Common myeloid progenitor, CD34-positive (primary cell): ENCODE measurements at regions of chr19 and their contacts with region 1.

Region 1: DNA sequence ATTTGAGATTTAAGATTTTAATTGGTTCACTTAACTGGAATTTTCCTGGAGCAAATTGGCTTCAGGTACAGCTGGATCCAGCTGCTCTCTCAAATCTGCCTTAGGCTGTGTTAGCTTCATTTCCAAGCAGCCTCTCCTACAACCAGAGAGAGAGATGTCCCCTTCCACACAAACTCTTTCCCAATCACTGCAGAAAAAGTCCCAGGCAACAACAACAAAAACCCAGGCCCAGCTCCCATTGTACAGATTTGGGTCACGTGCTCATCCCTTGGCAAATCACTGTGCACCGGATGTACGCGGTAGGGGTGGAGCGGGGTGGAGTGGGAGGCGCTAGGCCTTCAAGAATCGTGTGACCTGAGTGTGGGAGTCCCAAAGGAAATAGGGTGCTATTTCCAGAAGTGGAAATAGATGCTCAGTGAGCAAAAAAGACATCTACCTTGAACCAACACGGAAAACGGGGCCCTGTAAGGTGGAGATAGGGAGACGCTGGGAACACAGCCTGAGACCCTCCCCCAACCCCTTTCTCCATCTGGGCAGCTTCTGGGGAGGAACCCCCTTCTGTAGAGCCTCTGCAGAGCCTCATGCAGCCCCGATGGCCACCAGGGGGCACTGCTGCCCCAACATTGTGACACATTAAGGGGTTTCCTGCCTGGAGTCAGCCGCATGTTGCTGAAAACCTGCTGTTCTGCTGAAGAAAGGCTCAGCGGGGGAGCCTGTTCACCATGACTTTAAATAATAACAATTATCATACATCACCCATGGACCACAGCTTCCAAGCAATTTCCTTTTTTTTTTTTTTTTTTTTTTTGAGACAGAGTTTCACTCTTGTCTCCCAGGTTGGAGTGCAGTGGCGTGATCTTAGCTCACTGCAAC is 25.4 kb downstream of the HPN start:
- DNase-seq: peak; percentile 89 to 94 (median 92)
- H3K4me3 ChIP-seq: no peak overlapping the region
- H3K27ac ChIP-seq: no peak overlapping the region
- H3K4me1 ChIP-seq: no peaks in the 10 kb centered on the region
- H3K27me3 ChIP-seq: peaks cover 0 to 4% (median 0%) of the 10 kb centered on the region in 5 experiments

Region 2: GRCh38 chr19:35030257-35031071 is 36.5 kb before region 1 on chr19 and contains the start of gene SCN1B:
- CTCF ChIA-PET with region 1: no interaction called
- POLR2A ChIA-PET with region 1: no interaction called
- DNase-seq: peak; percentile 54 to 82 (median 71)
- H3K4me3 ChIP-seq: peak within 1 kb of the TSS; percentile 8 to 69 (median 50)
- H3K27ac ChIP-seq: no peak within 1 kb of the TSS
- H3K4me1 ChIP-seq: peaks cover 0 to 9% (median 7%) of the 10 kb centered on the region in 4 experiments
- H3K27me3 ChIP-seq: peaks cover 0 to 41% (median 10%) of the 10 kb centered on the region in 5 experiments

Region 3: GRCh38 chr19:35044317-35045117 is 22.4 kb before region 1 on chr19:
- CTCF ChIA-PET with region 1: interaction called, 18 read pairs
- POLR2A ChIA-PET with region 1: no interaction called
- DNase-seq: peak; percentile 65 to 76 (median 71)
- H3K4me3 ChIP-seq: no peak overlapping the region
- H3K27ac ChIP-seq: no peak overlapping the region
- H3K4me1 ChIP-seq: peaks cover 0 to 74% (median 70%) of the 10 kb centered on the region in 4 experiments
- H3K27me3 ChIP-seq: no peaks in the 10 kb centered on the region

Region 4: GRCh38 chr19:35055715-35056179 is 11.2 kb before region 1 on chr19:
- CTCF ChIA-PET with region 1: interaction called, 36 read pairs
- POLR2A ChIA-PET with region 1: no interaction called
- DNase-seq: peak in 2 of 3 donors; percentile 51 to 55
- H3K4me3 ChIP-seq: no peak overlapping the region
- H3K27ac ChIP-seq: no peak overlapping the region
- H3K4me1 ChIP-seq: peaks cover 0 to 5% (median 2%) of the 10 kb centered on the region in 4 experiments
- H3K27me3 ChIP-seq: no peaks in the 10 kb centered on the region

Region 5: DNA sequence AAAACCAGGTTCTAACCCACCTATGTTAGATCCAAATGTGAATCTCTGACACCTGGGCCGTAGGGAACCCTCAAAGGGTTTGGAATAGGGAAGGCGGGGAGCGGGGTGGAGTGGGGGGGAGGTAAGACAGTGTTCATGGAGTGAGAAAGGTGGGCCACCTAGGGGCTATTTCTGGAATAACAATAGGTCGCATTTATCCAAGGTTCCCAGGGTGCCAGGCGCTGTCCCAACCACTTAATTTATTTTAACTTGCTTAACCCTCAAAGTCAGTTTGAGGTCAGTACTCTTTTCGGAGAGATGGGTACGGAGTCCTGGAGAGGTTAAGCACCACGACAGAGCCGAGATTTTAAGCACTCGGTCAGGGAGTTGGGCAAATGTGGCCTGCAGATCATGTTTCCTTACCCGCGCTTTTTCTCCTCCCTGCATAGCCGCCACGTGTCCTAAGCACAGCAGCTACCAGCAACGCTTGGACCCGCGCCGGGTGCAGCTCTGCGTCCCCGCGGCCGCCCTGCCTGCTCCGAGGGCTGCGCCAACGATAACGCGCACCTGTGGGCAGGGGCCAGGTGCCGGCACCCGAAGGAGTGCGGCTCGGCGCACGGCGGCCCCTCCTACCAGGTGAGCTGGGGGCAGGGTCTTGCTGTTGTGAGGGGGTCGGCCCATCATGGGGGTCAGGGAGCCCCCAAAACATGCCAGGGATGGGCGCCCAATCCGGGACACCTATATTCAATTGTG is 23.7 kb after region 1 on chr19:
- CTCF ChIA-PET with region 1: interaction called, 11 read pairs
- POLR2A ChIA-PET with region 1: no interaction called
- DNase-seq: peak; percentile 62 to 73 (median 68)
- H3K4me3 ChIP-seq: peak overlapping the region in 1 of 7 experiments; percentile 17
- H3K27ac ChIP-seq: no peak overlapping the region
- H3K4me1 ChIP-seq: peaks cover 0 to 11% (median 8%) of the 10 kb centered on the region in 4 experiments
- H3K27me3 ChIP-seq: peaks cover 0 to 2% (median 0%) of the 10 kb centered on the region in 5 experiments

Region 6: DNA sequence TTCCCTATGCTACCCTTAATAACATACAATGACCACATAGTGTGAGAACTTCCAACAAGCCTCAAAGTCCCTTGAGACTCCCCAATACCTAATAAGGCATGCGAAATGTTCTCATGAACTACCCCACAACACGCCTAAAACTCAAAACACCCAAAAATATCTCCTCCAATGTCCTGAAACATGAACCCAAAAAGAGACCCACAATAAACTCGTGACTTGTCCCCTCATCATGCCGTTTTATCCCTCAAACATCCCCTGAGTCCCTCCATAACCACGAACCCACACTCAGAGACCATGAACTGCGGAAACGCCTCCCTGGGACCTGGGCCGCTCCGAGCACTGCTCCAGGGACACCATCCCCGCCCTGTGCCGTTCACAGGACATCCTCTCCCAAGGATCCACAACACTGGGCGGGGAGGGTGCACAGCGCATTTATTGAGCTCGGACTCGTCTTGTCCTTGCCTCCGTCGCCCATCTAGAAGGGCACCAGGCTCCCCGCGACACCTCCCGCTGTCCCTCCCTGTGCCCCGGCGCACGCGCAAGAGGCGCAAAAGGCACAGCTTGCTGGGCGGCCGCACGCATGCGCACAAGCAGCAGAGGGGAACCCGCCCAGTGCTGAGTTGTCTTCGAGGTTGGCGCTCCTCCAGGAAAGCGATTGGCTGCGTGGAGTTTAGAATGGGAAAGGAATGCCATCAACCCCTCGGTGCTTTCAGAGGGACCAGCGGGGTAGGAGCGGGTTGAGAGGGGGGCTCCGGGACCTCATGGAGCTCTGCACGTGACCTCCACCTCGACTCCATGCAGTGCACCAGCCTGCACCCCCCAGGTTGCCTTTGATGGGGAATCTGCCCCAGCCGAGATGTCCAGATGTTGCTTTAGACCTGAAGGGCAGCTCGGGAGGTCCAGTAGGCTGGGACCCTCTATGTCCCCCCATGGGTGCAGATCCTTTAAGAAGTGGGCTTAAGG is 57.5 kb after region 1 on chr19:
- CTCF ChIA-PET with region 1: interaction called, 11 read pairs
- POLR2A ChIA-PET with region 1: no interaction called
- DNase-seq: peak; percentile 78 to 84 (median 82)
- H3K4me3 ChIP-seq: peak overlapping the region in 6 of 7 experiments; percentile 19 to 82 (median 58)
- H3K27ac ChIP-seq: peak overlapping the region in 1 of 2 experiments; percentile 44
- H3K4me1 ChIP-seq: peaks cover under 1 to 37% (median 17%) of the 10 kb centered on the region in 4 experiments
- H3K27me3 ChIP-seq: no peaks in the 10 kb centered on the region

Region 7: DNA sequence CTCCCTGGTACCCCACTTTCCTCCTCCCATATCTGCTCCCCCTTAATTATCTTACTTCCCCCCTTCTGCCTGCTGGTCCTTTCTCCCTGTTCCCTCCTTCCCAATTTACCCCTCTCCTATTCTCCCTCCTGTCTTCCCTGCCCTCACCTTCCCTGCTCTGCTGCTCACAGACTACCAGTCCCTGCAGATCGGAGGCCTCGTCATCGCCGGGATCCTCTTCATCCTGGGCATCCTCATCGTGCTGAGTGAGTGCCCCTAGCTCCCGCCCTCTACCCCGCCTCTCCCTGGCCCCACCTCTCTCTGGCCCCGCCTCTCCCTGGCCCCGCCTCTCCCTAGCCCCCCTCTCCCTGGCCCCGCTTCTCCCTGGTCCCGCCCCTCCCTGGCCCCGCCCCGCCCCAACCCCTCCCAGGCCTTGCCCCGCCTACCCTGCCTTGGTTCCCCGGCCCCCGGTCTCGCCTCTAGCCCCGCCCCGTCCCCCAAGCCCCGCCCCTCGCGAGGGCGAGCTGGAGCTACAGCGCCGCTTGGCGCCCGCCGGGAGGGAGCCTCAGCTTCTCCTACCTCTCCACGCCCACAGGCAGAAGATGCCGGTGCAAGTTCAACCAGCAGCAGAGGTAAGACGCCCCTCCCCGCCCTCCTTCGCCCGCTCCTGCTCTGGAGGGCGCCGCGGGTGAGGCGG is 74.2 kb after region 1 on chr19:
- CTCF ChIA-PET with region 1: interaction called, 50 read pairs
- POLR2A ChIA-PET with region 1: no interaction called
- DNase-seq: peak; percentile 87 to 90 (median 89)
- H3K4me3 ChIP-seq: peak overlapping the region in 3 of 7 experiments; percentile 28 to 43 (median 37)
- H3K27ac ChIP-seq: no peak overlapping the region
- H3K4me1 ChIP-seq: peaks cover 0 to 39% (median 33%) of the 10 kb centered on the region in 4 experiments
- H3K27me3 ChIP-seq: peaks cover 0 to 33% (median 17%) of the 10 kb centered on the region in 5 experiments

Region 8: GRCh38 chr19:35342430-35342829 is 275.5 kb after region 1 on chr19:
- CTCF ChIA-PET with region 1: no interaction called
- POLR2A ChIA-PET with region 1: no interaction called
- DNase-seq: no peak
- H3K4me3 ChIP-seq: no peak overlapping the region
- H3K27ac ChIP-seq: no peak overlapping the region
- H3K4me1 ChIP-seq: peaks cover 0 to 26% (median 23%) of the 10 kb centered on the region in 4 experiments
- H3K27me3 ChIP-seq: no peaks in the 10 kb centered on the region